Dorsolateral prefrontal cortex (tissue), 120 donors: ENCODE measurements at regions of chr22 and their contacts with region 1.

Region 1: GRCh38 chr22:30694171-30694639 is 469 bp upstream of the OSBP2 start:
- DNase-seq: peak; percentile 53 to 79 (median 67)
- H3K4me3 ChIP-seq: peak overlapping the region; percentile 52 to 95 (median 74)
- H3K27ac ChIP-seq: peak overlapping the region; percentile 48 to 98 (median 95)
- H3K27me3 ChIP-seq: no peaks in the 10 kb centered on the region
- CTCF ChIP-seq: peak in 11 of 56 donors; percentile 6 to 23 (median 16)

Region 2: GRCh38 chr22:30649430-30650007 is 44.7 kb before region 1 on chr22:
- intact Hi-C with region 1: loop called in 1 of 2 experiments (anchors 5 kb)
- DNase-seq: peak in 3 of 10 donors; percentile 45 to 82 (median 60)
- H3K4me3 ChIP-seq: no peak overlapping the region
- H3K27ac ChIP-seq: peak overlapping the region in 43 of 59 donors; percentile 10 to 92 (median 58)
- H3K27me3 ChIP-seq: no peaks in the 10 kb centered on the region
- CTCF ChIP-seq: no peak

Region 3: GRCh38 chr22:30667494-30668385 is 26.5 kb before region 1 on chr22 and contains the start of gene DUSP18:
- intact Hi-C with region 1: loop called in 1 of 2 experiments (anchors 2 kb)
- DNase-seq: peak; percentile 89 to 95 (median 92)
- H3K4me3 ChIP-seq: peak within 1 kb of the TSS; percentile 59 to 98 (median 88)
- H3K27ac ChIP-seq: peak within 1 kb of the TSS in 45 of 59 donors; percentile 2 to 88 (median 58)
- H3K27me3 ChIP-seq: no peaks in the 10 kb centered on the region
- CTCF ChIP-seq: peak in 36 of 56 donors; percentile 2 to 50 (median 28)
- total RNA-seq, gene DUSP18: 6.2 to 23.2 (median 12.1) TPM

Region 4: DNA sequence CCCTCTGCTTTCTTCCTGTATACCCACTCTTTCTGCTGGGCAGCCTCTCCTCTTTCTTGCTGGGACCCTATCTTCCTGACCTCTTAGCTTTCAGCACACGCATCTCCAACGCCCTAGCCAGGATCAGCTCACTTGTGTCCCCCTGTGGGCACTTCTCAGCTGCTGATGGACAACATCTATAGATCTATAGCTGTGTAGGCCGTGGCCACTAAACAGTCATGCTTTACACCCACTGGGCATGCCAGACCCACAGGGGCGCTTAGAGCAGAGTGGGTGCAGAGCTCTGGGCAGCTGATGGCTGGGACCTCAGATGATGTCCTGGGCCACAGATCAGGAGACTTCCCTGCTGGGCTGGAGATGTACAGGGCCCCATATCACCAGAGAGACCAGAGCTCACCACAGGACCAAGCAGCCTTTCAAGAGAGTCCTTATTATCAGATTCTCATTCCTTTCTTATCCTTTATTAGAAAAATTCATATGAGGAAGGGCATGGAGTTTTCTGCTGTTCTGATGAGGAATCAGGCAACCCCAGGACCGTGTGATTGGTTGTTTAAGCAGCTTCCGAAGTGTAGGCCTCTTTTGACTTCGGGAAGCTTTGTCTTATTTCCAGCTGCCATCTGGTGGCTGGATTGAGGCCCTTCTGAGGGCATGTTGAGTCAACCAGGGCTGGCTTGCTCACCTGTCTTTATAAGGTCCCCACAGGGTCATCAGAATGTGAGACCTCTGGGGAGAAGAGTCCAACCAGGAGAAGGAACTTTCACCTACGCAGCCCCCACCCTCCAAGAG is 61.0 kb after region 1 on chr22:
- intact Hi-C with region 1: loop called (anchors 5 to 10 kb)
- DNase-seq: peak in 9 of 10 donors; percentile 27 to 72 (median 65)
- H3K4me3 ChIP-seq: no peak overlapping the region
- H3K27ac ChIP-seq: peak overlapping the region in 33 of 59 donors; percentile 1 to 72 (median 34)
- H3K27me3 ChIP-seq: no peaks in the 10 kb centered on the region
- CTCF ChIP-seq: peak in 55 of 56 donors; percentile 47 to 85 (median 69)